CD14-positive monocyte (primary cell): ENCODE measurements at regions of chr11 and their contacts with region 1.

Region 1: DNA sequence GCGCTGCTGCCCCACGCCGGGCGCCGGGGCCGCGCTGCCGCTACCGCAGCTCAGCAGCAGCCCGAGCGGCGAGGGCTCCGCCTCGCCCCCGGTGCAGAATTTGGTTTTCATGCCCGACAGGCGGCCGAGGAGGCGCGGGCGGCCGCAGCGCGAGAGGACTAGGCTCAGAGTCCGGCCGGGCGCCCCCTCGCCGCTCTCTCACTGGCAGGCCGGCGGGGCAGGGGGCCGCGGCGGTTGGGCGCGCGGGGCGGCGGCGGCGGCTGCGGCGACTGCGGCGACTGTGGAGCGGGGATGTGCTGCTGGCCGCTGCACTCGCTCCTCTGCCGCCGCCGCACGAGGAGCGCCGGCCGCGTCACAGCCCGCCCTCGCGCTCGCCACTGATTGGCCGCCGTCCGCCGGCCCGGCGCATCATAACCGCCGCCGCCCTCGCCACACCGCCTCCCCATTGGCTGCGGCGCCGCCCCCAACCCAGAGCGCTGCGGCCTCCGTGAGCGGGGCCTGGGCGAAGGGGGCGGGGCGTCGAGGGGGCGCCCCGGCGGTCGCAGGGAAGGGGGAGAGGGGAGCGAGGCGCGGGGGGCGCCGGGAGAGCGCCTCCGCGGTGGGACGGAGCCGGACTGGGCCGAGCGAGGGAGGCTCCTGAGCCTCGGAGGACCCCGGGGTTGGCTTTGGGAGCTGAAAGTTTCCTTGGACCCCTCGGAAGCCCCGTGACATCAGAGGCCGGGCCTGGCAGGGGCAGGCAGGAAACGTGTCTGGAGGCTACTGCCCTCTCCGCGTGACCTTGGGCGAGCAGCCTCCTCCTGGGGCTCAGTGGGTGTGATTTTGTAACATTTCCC is at the start of gene CHKA:
- DNase-seq: peak; percentile 93 to 95 (median 94)
- H3K4me3 ChIP-seq: peak within 1 kb of the TSS; percentile 59 to 77 (median 69)
- H3K4me3 Mint-ChIP-seq: peak within 1 kb of the TSS; percentile 87 to 92
- H3K27ac ChIP-seq: peak within 1 kb of the TSS; percentile 93 to 95
- H3K27ac Mint-ChIP-seq: peak within 1 kb of the TSS; percentile 87 to 96 (median 95)
- H3K4me1 ChIP-seq: peaks cover 35 to 39% of the 10 kb centered on the region in 2 donors
- H3K4me1 Mint-ChIP-seq: peaks cover 39% of the 10 kb centered on the region
- H3K27me3 ChIP-seq: no peaks in the 10 kb centered on the region
- H3K27me3 Mint-ChIP-seq: peaks cover 4 to 7% (median 5%) of the 10 kb centered on the region in 3 donors
- CTCF ChIP-seq: no peak
- polyA plus RNA-seq, gene CHKA: 2.8 to 20.9 (median 5.7) TPM

Region 2: DNA sequence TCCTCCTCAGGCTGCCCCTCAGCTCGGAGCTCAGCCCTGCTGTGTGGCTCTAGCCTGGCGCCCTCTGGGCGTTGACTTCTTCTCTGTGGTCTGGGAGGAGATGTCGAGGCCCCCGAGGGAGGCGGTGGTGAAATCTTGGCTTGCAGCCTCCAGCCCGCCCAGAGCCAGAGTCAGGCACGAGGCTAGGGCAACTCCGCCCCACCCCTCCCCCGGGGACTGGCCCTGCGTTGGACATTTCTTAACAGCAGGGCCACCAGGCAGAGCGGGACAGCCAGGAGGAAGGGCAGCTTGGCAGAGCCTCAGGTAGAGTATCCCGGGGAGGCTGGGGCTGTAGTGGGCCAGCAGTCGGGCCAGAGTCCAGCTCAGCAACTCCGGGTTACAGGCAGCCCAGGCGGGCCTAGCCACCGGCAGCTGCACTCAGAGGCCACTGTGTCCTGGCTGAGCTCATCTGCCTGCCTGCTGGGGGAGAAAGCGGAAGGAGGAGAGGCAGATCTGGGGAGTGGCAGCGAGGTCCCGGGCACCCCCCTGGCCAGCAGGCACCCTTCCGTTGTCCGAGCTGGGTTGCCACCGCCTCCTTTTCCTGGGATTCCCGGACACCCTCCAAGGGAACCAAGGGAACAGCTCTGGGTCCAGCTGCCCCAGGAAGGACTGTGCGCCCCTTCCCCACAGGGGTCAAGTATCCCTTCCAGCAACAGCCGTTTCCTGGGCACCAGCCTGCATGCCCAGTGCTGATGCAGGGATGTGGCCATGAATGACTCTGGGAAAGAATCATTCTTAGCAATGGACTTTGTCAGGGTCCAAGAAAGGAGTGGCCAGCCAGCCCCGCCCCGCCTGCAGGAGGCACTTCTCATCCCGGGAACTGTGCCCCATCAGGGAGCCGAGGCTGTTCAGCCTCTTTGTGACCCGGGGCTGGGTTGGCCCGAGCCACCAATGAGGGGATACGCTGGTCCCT is 110.9 kb before region 1 on chr11 and contains the start of gene ALDH3B1:
- intact Hi-C with region 1: loop called in 1 of 2 experiments (anchors 5 kb)
- DNase-seq: peak; percentile 83 to 90 (median 87)
- H3K4me3 ChIP-seq: peak within 1 kb of the TSS; percentile 52 to 89 (median 60)
- H3K4me3 Mint-ChIP-seq: peak within 1 kb of the TSS; percentile 83 to 92
- H3K27ac ChIP-seq: peak within 1 kb of the TSS; percentile 90 to 94
- H3K27ac Mint-ChIP-seq: peak within 1 kb of the TSS; percentile 91 to 97 (median 95)
- H3K4me1 ChIP-seq: peaks cover 76 to 85% of the 10 kb centered on the region in 2 donors
- H3K4me1 Mint-ChIP-seq: peaks cover 74% of the 10 kb centered on the region
- H3K27me3 ChIP-seq: no peaks in the 10 kb centered on the region
- H3K27me3 Mint-ChIP-seq: peaks cover 0 to 1% (median 0%) of the 10 kb centered on the region in 3 donors
- CTCF ChIP-seq: no peak
- polyA plus RNA-seq, gene ALDH3B1: 79.8 to 89.1 (median 86.7) TPM

Region 3: GRCh38 chr11:68038718-68039525 is 82.4 kb before region 1 on chr11 and contains the start of gene TCIRG1:
- intact Hi-C with region 1: loop called in 1 of 2 experiments (anchors 5 kb)
- DNase-seq: peak; percentile 67 to 81 (median 80)
- H3K4me3 ChIP-seq: peak within 1 kb of the TSS; percentile 84 to 96 (median 91)
- H3K4me3 Mint-ChIP-seq: peak within 1 kb of the TSS; percentile 89 to 95
- H3K27ac ChIP-seq: peak within 1 kb of the TSS; percentile 98 to 99
- H3K27ac Mint-ChIP-seq: peak within 1 kb of the TSS; percentile 98 to 100 (median 99)
- H3K4me1 ChIP-seq: peaks cover 51 to 73% of the 10 kb centered on the region in 2 donors
- H3K4me1 Mint-ChIP-seq: peaks cover 38% of the 10 kb centered on the region
- H3K27me3 ChIP-seq: no peaks in the 10 kb centered on the region
- H3K27me3 Mint-ChIP-seq: peaks cover 0 to 3% (median 0%) of the 10 kb centered on the region in 3 donors
- CTCF ChIP-seq: no peak
- polyA plus RNA-seq, gene TCIRG1: 197 to 1,286 (median 225) TPM

Region 4: DNA sequence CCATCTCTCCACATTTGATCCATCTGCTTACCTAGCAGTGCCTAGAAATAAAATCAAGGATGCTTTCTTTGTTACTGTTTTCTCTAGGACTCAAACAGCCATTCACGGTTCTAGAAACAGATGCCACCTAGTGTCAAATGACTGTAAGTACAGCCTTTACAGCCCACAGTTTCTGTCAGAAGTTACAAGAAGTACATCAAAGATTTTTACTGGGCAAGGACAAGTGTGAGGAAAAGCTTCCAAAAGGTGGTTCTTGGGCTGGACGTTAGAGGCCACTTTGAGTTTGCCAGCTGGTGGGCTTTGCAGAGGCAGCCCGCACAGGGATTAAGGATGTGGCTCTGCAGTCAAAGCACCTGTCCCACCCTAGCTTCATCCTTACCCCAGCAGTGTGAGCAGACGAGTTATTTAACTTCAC is 84.9 kb after region 1 on chr11:
- intact Hi-C with region 1: loop called (anchors 5 to 10 kb)
- DNase-seq: peak; percentile 41 to 62 (median 58)
- H3K4me3 ChIP-seq: no peak overlapping the region
- H3K4me3 Mint-ChIP-seq: no peak overlapping the region
- H3K27ac ChIP-seq: no peak overlapping the region
- H3K27ac Mint-ChIP-seq: peak overlapping the region in 3 of 7 donors; percentile 35 to 88 (median 54)
- H3K4me1 ChIP-seq: peaks cover 31 to 38% of the 10 kb centered on the region in 2 donors
- H3K4me1 Mint-ChIP-seq: peaks cover 54% of the 10 kb centered on the region
- H3K27me3 ChIP-seq: no peaks in the 10 kb centered on the region
- H3K27me3 Mint-ChIP-seq: peaks cover 0 to 1% (median 1%) of the 10 kb centered on the region in 3 donors
- CTCF ChIP-seq: peak; percentile 82

Region 5: DNA sequence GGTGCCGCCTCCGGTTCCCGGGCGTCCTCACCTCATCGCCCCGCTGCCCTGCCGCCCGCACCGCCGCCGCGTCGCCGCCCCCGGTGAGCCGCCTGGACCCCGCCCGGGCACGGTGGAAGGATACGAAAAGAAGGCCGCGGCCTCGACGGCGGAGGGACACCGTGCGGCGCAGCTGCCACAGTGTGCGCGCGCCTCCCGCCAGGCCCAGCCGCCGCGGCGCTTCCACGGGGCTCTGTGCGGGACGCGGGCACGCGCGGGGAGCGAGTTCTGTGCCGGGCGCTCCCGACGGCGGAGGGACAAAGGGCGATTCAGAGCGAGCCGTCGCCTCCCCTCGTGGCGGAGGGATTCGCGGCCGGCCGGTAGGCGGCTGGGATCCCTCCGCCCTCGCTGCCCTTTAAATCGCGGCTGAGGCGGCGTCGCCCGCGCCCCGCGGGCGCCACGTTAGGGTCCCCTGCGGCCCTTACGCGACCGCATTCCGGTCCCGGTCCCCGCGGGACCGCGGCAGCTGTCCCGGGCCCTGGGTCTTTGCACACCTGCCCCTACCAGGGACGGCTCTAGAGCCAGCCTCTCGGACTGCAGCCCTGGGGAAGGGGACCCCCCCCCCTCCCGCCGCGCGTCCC is 92.4 kb after region 1 on chr11:
- intact Hi-C with region 1: loop called (anchors 5 to 10 kb)
- DNase-seq: peak; percentile 86 to 96 (median 90)
- H3K4me3 ChIP-seq: peak overlapping the region; percentile 35 to 91 (median 84)
- H3K4me3 Mint-ChIP-seq: peak overlapping the region; percentile 81 to 87
- H3K27ac ChIP-seq: peak overlapping the region; percentile 49 to 97
- H3K27ac Mint-ChIP-seq: peak overlapping the region in 6 of 7 donors; percentile 75 to 91 (median 83)
- H3K4me1 ChIP-seq: peaks cover 39 to 47% of the 10 kb centered on the region in 2 donors
- H3K4me1 Mint-ChIP-seq: peaks cover 47% of the 10 kb centered on the region
- H3K27me3 ChIP-seq: peaks cover 0 to 18% of the 10 kb centered on the region in 2 donors
- H3K27me3 Mint-ChIP-seq: peaks cover 20 to 29% (median 21%) of the 10 kb centered on the region in 3 donors
- CTCF ChIP-seq: no peak

Region 6: GRCh38 chr11:68312117-68312779 is 191.0 kb after region 1 on chr11 and contains the start of gene LRP5:
- intact Hi-C with region 1: no loop called
- DNase-seq: no peak
- H3K4me3 ChIP-seq: peak within 1 kb of the TSS; percentile 3 to 73 (median 26)
- H3K4me3 Mint-ChIP-seq: peak within 1 kb of the TSS; percentile 81 to 92
- H3K27ac ChIP-seq: no peak within 1 kb of the TSS
- H3K27ac Mint-ChIP-seq: no peak within 1 kb of the TSS
- H3K4me1 ChIP-seq: peaks cover 15 to 19% of the 10 kb centered on the region in 2 donors
- H3K4me1 Mint-ChIP-seq: peaks cover 36% of the 10 kb centered on the region
- H3K27me3 ChIP-seq: peaks cover 19 to 40% of the 10 kb centered on the region in 2 donors
- H3K27me3 Mint-ChIP-seq: peaks cover 49 to 63% (median 57%) of the 10 kb centered on the region in 3 donors
- CTCF ChIP-seq: no peak
- polyA plus RNA-seq, gene LRP5: 0.23 to 0.29 TPM in 2 of 3 donors, not detected in the other